ENCODE measurements at regions of chr5 and their contacts with region 1.

Region 1: GRCh38 chr5:43105369-43106289 is 15.1 kb upstream of the ZNF131 start:
- DNase-seq: peak; percentile 90 to 97
- H3K4me3 ChIP-seq: peak overlapping the region; percentile 42 to 50 (median 43)
- H3K27ac ChIP-seq: peak overlapping the region; percentile 23 to 79 (median 64)
- H3K4me1 ChIP-seq: peaks cover 3 to 16% (median 9%) of the 10 kb centered on the region in 4 donors
- H3K27me3 ChIP-seq: no peaks in the 10 kb centered on the region
- CTCF ChIP-seq: peak in 6 of 7 experiments; percentile 13 to 99 (median 98)
- EP300 ChIP-seq: no peak
- POLR2A ChIP-seq: no peak

Region 2: DNA sequence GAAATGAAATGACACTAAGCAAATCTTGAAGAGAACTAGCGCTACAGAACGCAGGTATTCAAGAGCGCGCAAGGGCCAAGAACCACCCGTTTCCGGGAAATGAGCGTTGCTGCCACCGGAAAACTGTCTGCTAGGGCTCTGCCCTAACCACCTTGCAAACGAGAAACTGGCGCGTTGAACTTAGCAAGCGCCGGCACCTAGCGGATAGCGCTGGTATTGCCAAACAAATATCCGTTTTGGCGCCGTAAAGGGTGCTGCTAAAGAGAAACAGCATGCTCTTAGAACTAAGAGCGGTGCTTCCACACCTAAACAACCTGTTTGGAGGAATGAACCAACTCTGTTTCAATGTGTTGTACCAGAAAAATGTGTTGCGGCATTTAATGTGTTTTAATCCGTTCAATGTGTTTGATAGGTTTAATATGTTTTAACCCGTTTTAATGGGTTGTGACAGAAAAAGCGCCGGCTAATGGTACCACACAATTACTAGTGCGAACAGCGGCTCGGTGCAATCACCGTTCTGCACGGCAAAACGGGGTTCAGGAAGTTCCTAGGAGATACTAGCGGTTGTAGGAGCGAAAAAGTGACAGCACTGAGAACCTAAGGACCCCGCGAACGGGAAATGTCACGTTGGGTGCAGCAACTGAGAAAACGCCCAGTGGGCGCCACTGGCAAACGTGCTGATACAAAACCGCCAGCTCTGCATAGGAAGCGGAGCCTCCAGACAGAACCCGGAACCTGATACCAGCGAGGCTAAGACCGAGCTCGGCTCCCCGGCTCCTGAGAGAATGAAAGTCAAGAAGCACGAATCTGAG is 65.1 kb before region 1 on chr5 and contains the start of gene ANXA2R:
- intact Hi-C with region 1: loop called (anchors 10 kb)
- DNase-seq: peak; percentile 88 to 96
- H3K4me3 ChIP-seq: peak within 1 kb of the TSS; percentile 57 to 65 (median 64)
- H3K27ac ChIP-seq: peak within 1 kb of the TSS; percentile 65 to 96 (median 91)
- H3K4me1 ChIP-seq: peaks cover 0 to 69% (median 44%) of the 10 kb centered on the region in 4 donors
- H3K27me3 ChIP-seq: peaks cover 4 to 92% (median 32%) of the 10 kb centered on the region in 3 donors
- CTCF ChIP-seq: peak in 5 of 7 experiments; percentile 62 to 87 (median 80)
- EP300 ChIP-seq: no peak
- POLR2A ChIP-seq: no peak
- total RNA-seq, gene ANXA2R: 1.2 to 7.5 (median 2.8) TPM in 4 of 5 donors, not detected in the other

Measured in stomach (tissue), 19 donors.